ENCODE measurements at regions of chr14 and their contacts with region 1.

Region 1: GRCh38 chr14:23588884-23589598 is 10.5 kb upstream of the JPH4 start:
- DNase-seq: peak; percentile 89 to 92 (median 91)
- ATAC-seq: peak; percentile 100
- H3K4me3 ChIP-seq: no peak overlapping the region
- H3K27ac ChIP-seq: no peak overlapping the region
- H3K4me1 ChIP-seq: peaks cover 5% of the 10 kb centered on the region in 2 experiments; a peak in 3 of 5 replicates
- H3K27me3 ChIP-seq: no peaks in the 10 kb centered on the region; a peak in 1 of 5 replicates
- CTCF ChIP-seq: peak; percentile 91 to 97 (median 93)
- EP300 ChIP-seq: no peak
- POLR2A ChIP-seq: no peak
- RAD21 ChIP-seq: peak; percentile 91 to 93

Region 2: GRCh38 chr14:23621932-23622730 is 33.1 kb after region 1 on chr14:
- CTCF ChIA-PET with region 1: interaction called, 3 read pairs
- POLR2A ChIA-PET with region 1: no interaction called
- in situ Hi-C with region 1: no loop called
- intact Hi-C with region 1: loop called (anchors 2 kb)
- DNase-seq: no peak
- ATAC-seq: no peak
- H3K4me3 ChIP-seq: no peak overlapping the region
- H3K27ac ChIP-seq: no peak overlapping the region
- H3K4me1 ChIP-seq: peaks cover 0 to 2% of the 10 kb centered on the region in 2 experiments; a peak in 1 of 5 replicates
- H3K27me3 ChIP-seq: no peaks in the 10 kb centered on the region
- CTCF ChIP-seq: no peak
- EP300 ChIP-seq: no peak
- POLR2A ChIP-seq: no peak
- RAD21 ChIP-seq: no peak

Region 3: DNA sequence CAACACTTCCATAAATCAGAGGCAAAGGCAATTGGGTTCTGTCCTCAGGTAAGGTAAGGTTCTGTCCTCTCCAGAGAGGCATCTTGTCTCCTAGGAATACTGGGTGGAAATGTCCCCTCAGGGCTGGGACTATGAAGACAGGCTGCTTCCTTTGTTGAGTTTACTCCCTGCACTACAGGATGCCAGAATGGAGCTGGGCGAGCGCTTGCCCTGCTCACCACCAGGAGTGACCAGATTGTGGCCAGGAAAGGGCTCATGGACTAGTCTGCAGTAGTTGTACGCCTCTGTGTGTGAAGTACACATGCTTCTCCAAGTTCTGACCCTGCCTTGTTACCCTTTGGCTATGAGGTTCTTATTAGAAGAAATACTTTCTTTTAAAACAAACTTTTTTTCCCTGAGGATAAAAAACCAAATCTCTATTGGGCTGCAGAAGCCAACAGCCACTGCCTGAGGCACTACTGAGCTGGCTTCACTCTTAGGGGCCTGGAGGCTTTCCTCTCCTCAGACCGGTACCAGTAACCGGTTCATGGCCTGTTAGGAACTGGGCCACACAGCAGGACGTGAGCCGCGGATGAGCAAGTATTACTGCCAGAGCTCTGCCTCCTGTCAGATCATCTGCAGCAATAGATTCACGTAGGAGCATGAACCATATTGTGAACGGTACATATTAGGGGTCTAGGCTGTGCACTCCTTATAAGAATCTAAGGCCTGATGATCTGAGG is 130.3 kb after region 1 on chr14:
- CTCF ChIA-PET with region 1: no interaction called
- POLR2A ChIA-PET with region 1: no interaction called
- in situ Hi-C with region 1: no loop called
- intact Hi-C with region 1: loop called (anchors 10 kb)
- DNase-seq: no peak
- ATAC-seq: no peak
- H3K4me3 ChIP-seq: no peak overlapping the region
- H3K27ac ChIP-seq: no peak overlapping the region
- H3K4me1 ChIP-seq: no peaks in the 10 kb centered on the region; a peak in 1 of 5 replicates
- H3K27me3 ChIP-seq: no peaks in the 10 kb centered on the region
- CTCF ChIP-seq: no peak
- EP300 ChIP-seq: no peak
- POLR2A ChIP-seq: no peak
- RAD21 ChIP-seq: no peak

Region 4: DNA sequence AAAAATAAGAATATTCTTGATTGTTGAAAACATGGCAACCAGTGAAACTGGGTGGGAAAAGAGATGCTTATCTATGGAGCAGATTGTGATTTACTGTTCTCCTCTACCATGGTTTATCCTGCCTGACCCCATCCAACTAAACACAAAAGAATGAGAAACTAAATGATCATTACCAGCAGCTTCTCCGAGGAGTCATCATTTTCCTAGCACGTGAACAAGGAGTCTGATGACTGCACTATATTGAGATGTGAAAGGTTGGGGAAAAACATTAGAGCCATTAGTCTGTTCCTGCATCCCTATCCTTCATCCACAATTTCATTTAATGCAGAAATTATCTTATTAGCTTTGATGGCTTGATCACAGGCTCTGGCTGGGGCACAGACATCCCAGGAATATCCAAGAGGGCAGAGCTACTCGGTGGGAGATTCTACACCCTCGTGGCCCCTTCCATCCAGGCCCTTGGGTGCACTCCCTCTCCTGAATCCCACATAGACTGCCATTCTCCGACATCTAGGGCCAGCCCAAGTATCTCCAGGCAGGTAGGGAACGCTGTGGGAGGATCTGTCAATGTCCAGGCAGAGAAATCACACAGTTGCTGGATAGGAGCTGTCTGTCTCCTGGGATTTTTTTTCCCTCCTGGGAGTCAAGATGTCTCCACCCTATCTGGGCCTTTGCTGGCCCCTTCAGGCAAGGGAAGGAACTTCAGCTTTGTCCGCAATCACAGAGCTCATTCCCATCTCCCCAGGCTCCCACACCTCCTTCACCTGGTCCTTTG is 321.2 kb after region 1 on chr14:
- CTCF ChIA-PET with region 1: interaction called, 7 read pairs
- POLR2A ChIA-PET with region 1: no interaction called
- in situ Hi-C with region 1: no loop called
- intact Hi-C with region 1: loop called (anchors 5 kb)
- DNase-seq: peak; percentile 46 to 61 (median 56)
- ATAC-seq: peak; percentile 89
- H3K4me3 ChIP-seq: no peak overlapping the region
- H3K27ac ChIP-seq: no peak overlapping the region
- H3K4me1 ChIP-seq: no peaks in the 10 kb centered on the region
- H3K27me3 ChIP-seq: no peaks in the 10 kb centered on the region
- CTCF ChIP-seq: peak; percentile 63 to 77 (median 73)
- EP300 ChIP-seq: no peak
- POLR2A ChIP-seq: no peak
- RAD21 ChIP-seq: peak; percentile 56 to 75

Region 5: DNA sequence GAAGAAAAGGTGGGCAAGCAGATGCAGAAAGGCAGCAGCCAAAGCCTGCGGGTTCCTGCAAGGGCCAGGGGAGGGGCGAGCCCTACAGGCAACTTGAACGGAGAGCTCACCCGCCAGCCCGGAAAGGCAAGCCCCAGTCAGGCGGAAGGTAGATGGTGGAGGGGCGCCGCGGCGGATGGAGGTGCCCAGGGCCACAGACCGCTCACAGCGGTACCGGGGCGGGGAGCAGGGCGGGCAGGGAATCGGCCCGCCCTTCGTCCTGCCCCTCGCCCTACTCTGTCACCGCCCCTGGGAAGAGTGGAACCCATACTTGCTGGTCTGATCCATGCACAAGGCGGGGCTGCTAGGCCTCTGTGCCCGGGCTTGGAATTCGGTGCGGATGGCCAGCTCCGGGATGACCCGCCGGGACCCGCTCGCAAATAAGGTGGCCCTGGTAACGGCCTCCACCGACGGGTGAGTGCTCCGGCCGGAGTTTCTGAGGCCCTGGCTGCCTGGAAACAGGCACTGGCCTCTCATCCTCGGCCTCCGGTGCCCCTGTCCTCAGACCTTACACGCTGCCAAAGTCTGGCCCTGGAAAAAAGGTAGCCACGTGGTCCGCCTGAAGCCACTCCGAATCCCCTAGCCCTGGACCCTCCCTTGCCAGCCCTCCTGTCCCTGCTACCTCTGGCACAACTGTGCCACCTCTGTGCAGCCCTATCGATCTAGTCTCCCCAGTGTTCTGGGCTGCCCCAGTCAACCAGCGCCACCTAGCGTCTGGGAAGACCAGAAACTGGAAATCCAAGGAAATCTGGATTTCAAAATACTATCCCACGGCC is 364.6 kb after region 1 on chr14 and contains the start of gene DHRS4:
- CTCF ChIA-PET with region 1: interaction called, 3 read pairs
- POLR2A ChIA-PET with region 1: no interaction called
- in situ Hi-C with region 1: no loop called
- intact Hi-C with region 1: loop called (anchors 5 kb)
- DNase-seq: peak; percentile 66 to 76 (median 70)
- ATAC-seq: peak; percentile 97
- H3K4me3 ChIP-seq: peak within 1 kb of the TSS; percentile 63
- H3K27ac ChIP-seq: peak within 1 kb of the TSS; percentile 55
- H3K4me1 ChIP-seq: peaks cover 0 to 10% of the 10 kb centered on the region in 2 experiments; a peak in 2 of 5 replicates
- H3K27me3 ChIP-seq: no peaks in the 10 kb centered on the region
- CTCF ChIP-seq: peak; percentile 80 to 83 (median 82)
- EP300 ChIP-seq: no peak
- POLR2A ChIP-seq: peak; percentile 65
- RAD21 ChIP-seq: peak; percentile 67 to 73
- polyA plus RNA-seq, gene DHRS4: 0.51 to 1.6 TPM